ENCODE measurements at regions of chr12 and their contacts with region 1.

Region 1: DNA sequence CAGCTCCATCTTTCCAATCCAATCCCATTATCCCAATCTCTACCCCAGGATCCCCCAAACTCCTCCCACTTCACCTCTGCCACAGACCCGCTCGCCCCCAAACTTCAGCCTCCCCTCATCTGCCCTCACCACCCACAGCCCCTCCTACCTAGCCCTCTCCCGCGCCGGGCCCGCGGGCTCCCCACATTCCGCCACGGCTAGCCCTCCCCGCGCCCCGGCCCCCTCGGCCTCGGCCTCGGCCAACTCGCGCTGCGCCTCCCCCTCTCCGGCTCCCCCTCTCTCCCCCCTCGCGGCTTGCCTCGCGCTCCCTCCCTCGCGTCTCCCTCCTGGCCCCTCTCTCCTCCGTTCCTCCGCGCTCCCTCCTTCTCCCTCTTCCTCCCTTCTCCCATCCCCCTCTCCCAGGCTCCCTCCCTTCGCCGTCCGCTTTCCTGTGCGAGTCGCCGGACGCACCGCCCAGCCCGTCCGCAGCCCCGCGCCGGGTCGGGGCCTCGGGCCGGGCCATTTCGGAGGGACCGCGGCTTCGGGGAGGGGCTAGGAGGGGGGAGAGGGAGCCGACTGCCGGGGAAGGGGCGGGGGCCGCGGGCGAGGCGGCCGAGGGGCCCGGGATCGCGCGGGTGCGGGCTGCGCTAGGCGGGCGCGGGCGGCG is at the start of gene ATN1:
- DNase-seq: peak; percentile 56 to 59
- ATAC-seq: peak; percentile 11 to 23; a peak in 5 of 6 replicates
- H3K4me3 ChIP-seq: peak within 1 kb of the TSS; percentile 93
- H3K27ac ChIP-seq: peak within 1 kb of the TSS; percentile 99 to 100
- H3K4me1 ChIP-seq: peaks cover 50% of the 10 kb centered on the region
- CTCF ChIP-seq: no peak
- EP300 ChIP-seq: no peak
- POLR2A ChIP-seq: peak; percentile 67
- RAD21 ChIP-seq: no peak
- polyA plus RNA-seq, gene ATN1: 11.3 and 23.1 TPM in 2 replicates

Region 2: DNA sequence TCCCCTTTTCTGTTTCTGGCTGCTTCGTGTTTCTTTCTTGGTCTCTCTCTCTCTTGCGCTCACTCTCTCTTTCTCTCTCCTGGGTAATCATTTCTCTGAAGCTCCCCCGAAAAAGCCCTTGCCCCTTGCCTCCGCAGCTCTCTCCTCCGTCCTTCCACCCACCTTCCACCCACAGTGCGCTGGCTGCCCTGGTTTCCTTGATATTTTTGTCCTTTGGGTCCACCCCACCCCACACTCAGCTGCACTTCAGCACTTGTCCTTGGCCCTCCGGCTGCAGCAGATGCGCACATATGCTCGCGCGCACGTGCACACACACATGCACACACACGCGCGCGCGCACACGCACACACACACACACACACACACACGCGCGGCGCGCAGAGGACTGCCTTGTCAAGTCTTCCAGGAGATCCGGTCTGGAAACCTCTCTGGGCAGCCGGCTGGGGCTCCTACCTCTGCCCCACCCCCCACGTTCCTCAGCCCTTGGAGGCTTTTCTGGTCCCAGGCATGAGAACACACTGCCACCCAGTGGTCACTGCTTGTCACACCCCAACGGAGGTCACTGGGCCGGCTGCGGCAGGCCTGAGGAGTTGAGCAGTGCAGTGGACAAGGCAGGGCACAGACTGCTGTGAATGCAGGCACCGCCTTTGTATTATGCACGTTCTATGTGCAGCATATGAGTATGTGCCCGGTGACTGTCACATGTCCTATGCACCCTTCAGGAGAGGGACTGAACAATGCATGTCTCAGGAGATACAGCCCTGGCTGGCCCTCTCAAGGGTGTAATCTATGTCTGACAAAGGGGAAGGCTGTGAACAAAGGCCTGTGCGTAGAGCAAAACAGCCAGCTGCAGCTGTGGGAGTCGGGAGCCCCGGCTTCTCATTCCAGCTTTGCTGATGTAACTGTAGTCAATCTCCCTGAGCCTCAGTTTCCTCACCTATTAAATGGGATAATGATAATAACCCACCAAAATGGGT is 148.6 kb before region 1 on chr12:
- CTCF ChIA-PET with region 1: no interaction called
- POLR2A ChIA-PET with region 1: no interaction called
- DNase-seq: peak; percentile 71 to 91
- ATAC-seq: peak; percentile 94 to 97
- H3K4me3 ChIP-seq: peak overlapping the region; percentile 30; the same call in 2 of the 3 replicates
- H3K27ac ChIP-seq: peak overlapping the region; percentile 34 to 80; a peak in 4 of 6 replicates
- H3K4me1 ChIP-seq: peaks cover 15% of the 10 kb centered on the region; the same call in 2 of the 3 replicates
- CTCF ChIP-seq: peak; percentile 94
- EP300 ChIP-seq: no peak
- POLR2A ChIP-seq: no peak
- RAD21 ChIP-seq: peak; percentile 98 to 99

Region 3: GRCh38 chr12:6867413-6868210 is 59.9 kb before region 1 on chr12 and contains the start of gene TPI1:
- CTCF ChIA-PET with region 1: interaction called, 183 read pairs
- POLR2A ChIA-PET with region 1: interaction called, 14 read pairs
- DNase-seq: peak; percentile 77 to 85
- ATAC-seq: peak; percentile 45 to 71
- H3K4me3 ChIP-seq: peak within 1 kb of the TSS; percentile 100
- H3K27ac ChIP-seq: peak within 1 kb of the TSS; percentile 97 to 99
- H3K4me1 ChIP-seq: peaks cover 42% of the 10 kb centered on the region
- CTCF ChIP-seq: no peak
- EP300 ChIP-seq: no peak
- POLR2A ChIP-seq: peak; percentile 99
- RAD21 ChIP-seq: no peak
- polyA plus RNA-seq, gene TPI1: 1,913 and 2,511 TPM in 2 replicates

Region 4: GRCh38 chr12:6890789-6891645 is 36.5 kb before region 1 on chr12:
- CTCF ChIA-PET with region 1: interaction called, 38 read pairs
- POLR2A ChIA-PET with region 1: interaction called, 9 read pairs
- DNase-seq: peak; percentile 93 to 99
- ATAC-seq: peak; percentile 95 to 96
- H3K4me3 ChIP-seq: peak overlapping the region; percentile 40
- H3K27ac ChIP-seq: peak overlapping the region; percentile 94 to 98
- H3K4me1 ChIP-seq: peaks cover 38% of the 10 kb centered on the region
- CTCF ChIP-seq: peak; percentile 95
- EP300 ChIP-seq: peak in 1 of 2 experiments; percentile 54; a peak in 1 of 5 replicates
- POLR2A ChIP-seq: peak; percentile 70
- RAD21 ChIP-seq: peak; percentile 69 to 94

Region 5: DNA sequence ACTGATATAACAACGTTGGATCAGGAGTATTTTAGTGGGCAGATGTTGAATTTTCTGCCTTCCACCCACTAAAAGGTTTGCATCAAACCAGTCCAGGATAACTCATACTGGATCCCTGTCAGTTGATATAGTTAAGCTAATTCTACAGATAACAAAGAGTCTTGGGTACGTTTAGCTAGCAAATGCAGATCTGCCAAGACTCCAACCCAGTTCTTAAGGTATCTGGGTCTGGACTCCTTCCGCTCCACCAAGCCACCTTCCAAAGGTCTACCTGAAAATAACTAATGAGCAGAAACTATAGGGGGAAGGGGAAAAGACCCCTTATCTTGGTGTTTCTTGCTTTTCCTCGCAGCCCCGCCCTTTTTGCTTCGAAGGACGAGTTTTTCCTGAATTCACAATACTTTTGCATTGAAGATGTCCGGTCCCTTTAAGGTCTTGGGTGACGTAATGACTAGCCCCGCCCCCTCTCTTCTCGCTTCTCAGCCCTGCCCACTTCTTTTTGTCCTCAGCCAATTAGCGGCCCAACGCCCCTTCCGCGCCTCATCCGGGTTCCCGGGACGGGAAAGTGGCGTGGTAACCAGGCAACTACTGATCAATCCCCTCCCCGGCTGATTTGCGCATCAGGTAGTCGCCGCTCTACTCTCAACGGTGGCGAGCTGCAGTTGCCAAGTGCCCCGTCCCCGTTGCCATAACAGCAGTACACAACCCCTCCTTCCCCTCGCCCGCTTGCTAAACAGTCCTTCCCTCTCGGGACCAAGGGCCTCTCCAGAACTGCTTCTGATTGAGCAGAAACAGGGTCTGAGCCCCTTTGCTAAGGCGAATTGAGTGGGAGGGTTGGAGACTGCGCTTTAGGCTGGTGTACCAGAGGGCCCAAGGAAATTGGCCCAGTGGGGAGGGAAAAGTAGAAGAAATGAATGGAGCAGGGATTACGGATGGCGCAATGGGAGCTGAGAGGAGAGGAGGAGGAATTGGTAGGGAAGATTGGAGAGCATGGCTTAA is 22.9 kb before region 1 on chr12 and contains the start of gene LRRC23:
- CTCF ChIA-PET with region 1: interaction called, 65 read pairs
- POLR2A ChIA-PET with region 1: interaction called, 4 read pairs
- DNase-seq: peak; percentile 95 to 98
- ATAC-seq: peak; percentile 94 to 97
- H3K4me3 ChIP-seq: peak within 1 kb of the TSS; percentile 78
- H3K27ac ChIP-seq: peak within 1 kb of the TSS; percentile 82 to 91
- H3K4me1 ChIP-seq: peaks cover 11% of the 10 kb centered on the region; the same call in 2 of the 3 replicates
- CTCF ChIP-seq: no peak
- EP300 ChIP-seq: no peak
- POLR2A ChIP-seq: peak; percentile 71
- RAD21 ChIP-seq: no peak
- polyA plus RNA-seq, gene LRRC23: 33.3 and 40.4 TPM in 2 replicates

Region 6: DNA sequence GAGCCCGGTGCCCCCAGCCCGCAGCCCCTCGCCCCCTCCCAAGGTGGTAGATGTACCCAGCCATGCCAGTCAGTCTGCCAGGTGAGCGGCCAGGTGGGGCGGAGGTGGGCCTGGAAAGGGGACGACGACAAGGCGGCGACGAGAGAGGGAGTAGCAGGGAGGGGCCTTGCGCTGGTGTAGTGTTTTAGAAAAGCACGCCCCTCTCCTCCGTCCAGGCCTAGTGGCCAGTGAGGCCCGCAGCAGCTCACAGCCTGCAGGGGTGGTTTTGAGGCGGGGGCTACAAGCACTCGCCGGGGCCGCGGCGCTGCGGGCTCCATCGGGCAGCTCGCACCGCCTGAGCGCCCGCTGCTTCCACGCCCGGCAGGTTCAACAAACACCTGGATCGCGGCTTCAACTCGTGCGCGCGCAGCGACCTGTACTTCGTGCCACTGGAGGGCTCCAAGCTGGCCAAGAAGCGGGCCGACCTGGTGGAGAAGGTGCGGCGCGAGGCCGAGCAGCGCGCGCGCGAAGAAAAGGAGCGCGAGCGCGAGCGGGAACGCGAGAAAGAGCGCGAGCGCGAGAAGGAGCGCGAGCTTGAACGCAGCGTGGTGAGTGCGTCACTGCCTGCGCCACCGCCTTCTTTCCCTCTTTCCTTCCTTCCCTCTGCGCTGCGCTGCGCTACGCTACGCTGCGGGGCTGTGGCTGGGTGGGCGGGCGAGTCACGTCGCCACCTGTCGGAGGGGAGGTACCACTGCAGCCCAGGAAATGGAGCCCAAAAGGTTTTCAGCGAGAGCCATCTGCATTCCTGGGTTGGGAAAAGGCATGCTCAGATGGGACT is 10.2 kb after region 1 on chr12:
- CTCF ChIA-PET with region 1: interaction called, 370 read pairs
- POLR2A ChIA-PET with region 1: interaction called, 44 read pairs
- DNase-seq: peak; percentile 80 to 98
- ATAC-seq: peak; percentile 86 to 93
- H3K4me3 ChIP-seq: peak overlapping the region; percentile 49
- H3K27ac ChIP-seq: peak overlapping the region; percentile 81 to 92
- H3K4me1 ChIP-seq: peaks cover 45% of the 10 kb centered on the region
- CTCF ChIP-seq: peak; percentile 84
- EP300 ChIP-seq: no peak
- POLR2A ChIP-seq: peak; percentile 92
- RAD21 ChIP-seq: peak; percentile 37 to 40; a peak in 4 of 5 replicates

Region 7: GRCh38 chr12:6953442-6954315 is 26.2 kb after region 1 on chr12:
- CTCF ChIA-PET with region 1: interaction called, 370 read pairs
- POLR2A ChIA-PET with region 1: no interaction called
- DNase-seq: no peak
- ATAC-seq: no peak
- H3K4me3 ChIP-seq: no peak overlapping the region
- H3K27ac ChIP-seq: no peak overlapping the region
- H3K4me1 ChIP-seq: 0 out of 3 replicates have a peak, but pooled peaks cover 3% of the 10 kb centered on the region
- CTCF ChIP-seq: no peak
- EP300 ChIP-seq: no peak
- POLR2A ChIP-seq: no peak
- RAD21 ChIP-seq: no peak

Region 8: GRCh38 chr12:7108796-7109571 is 181.5 kb after region 1 on chr12 and contains the start of gene C1RL:
- CTCF ChIA-PET with region 1: interaction called, 10 read pairs
- POLR2A ChIA-PET with region 1: no interaction called
- DNase-seq: peak; percentile 73 to 90
- ATAC-seq: peak; percentile 67 to 71
- H3K4me3 ChIP-seq: peak within 1 kb of the TSS; percentile 55
- H3K27ac ChIP-seq: peak within 1 kb of the TSS; percentile 96 to 97
- H3K4me1 ChIP-seq: peaks cover 30% of the 10 kb centered on the region
- CTCF ChIP-seq: peak; percentile 88
- EP300 ChIP-seq: 0 out of 5 replicates have a peak, but pooled peaks of 1 of the 2 experiments have one; percentile 24
- POLR2A ChIP-seq: peak; percentile 41
- RAD21 ChIP-seq: peak; percentile 81
- polyA plus RNA-seq, gene C1RL: 30.4 and 32.4 TPM in 2 replicates

Measured in A549 (cell line).